ENCODE measurements at regions of chrX and their contacts with region 1.

Region 1: GRCh38 chrX:46837558-46838478 is 975 bp downstream of the RP2 start:
- H3K4me3 Mint-ChIP-seq: peak overlapping the region; percentile 99
- H3K27ac Mint-ChIP-seq: peak overlapping the region; percentile 98
- H3K4me1 Mint-ChIP-seq: peaks cover 10% of the 10 kb centered on the region
- H3K27me3 Mint-ChIP-seq: no peaks in the 10 kb centered on the region

Region 2: DNA sequence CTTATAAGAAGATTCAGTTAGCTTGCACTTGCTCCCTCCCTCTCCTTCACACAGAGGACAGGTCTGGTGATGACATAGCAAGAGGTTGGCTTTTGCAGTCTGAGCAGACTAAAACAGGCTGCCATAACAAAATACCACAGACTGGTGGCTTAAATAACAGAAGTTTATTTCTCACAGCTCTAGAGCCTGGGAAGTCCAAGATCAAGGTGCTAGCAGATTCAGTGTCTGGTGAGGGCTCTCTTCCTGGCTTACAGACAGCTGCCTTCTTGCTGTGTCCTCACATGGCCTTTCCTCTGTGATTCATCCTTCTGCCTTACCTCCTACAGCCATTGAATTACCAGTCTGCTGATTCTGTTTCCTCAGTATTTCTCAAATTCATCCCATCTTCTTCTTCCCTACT is 12.1 kb after region 1 on chrX:
- intact Hi-C with region 1: no loop called
- H3K4me3 Mint-ChIP-seq: no peak overlapping the region
- H3K27ac Mint-ChIP-seq: no peak overlapping the region
- H3K4me1 Mint-ChIP-seq: peaks cover 14% of the 10 kb centered on the region
- H3K27me3 Mint-ChIP-seq: no peaks in the 10 kb centered on the region

Region 3: DNA sequence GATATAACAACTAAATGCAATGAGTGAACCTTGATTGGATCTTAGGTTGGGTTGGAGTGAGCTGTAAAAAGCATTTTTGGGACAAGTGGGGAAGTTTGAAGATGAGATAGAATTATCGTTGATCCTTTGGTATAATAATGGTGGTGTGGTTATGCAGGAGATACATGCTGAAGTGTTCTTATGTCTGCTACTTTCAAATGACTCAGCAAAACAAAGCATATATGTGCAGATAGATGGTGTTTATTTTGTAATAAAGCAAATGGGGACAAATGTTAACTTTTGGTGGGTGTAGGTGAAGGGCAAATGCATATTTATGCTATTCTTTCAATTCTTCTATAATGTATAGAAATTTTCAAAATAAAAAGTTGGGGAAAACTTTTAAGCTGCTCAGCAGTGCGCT is 25.3 kb after region 1 on chrX:
- intact Hi-C with region 1: loop called (anchors 2 kb)
- H3K4me3 Mint-ChIP-seq: no peak overlapping the region
- H3K27ac Mint-ChIP-seq: peak overlapping the region; percentile 55
- H3K4me1 Mint-ChIP-seq: peaks cover 35% of the 10 kb centered on the region
- H3K27me3 Mint-ChIP-seq: no peaks in the 10 kb centered on the region

Measured in dendritic cell treated with granulocyte-macrophage colony-stimulating factor and Interleukin-4, amounts not matched to agents 40 ng/mL and 50 ng/mL, for 4 days (primary cell).